ENCODE measurements at regions of chr6 and their contacts with region 1.

Region 1: DNA sequence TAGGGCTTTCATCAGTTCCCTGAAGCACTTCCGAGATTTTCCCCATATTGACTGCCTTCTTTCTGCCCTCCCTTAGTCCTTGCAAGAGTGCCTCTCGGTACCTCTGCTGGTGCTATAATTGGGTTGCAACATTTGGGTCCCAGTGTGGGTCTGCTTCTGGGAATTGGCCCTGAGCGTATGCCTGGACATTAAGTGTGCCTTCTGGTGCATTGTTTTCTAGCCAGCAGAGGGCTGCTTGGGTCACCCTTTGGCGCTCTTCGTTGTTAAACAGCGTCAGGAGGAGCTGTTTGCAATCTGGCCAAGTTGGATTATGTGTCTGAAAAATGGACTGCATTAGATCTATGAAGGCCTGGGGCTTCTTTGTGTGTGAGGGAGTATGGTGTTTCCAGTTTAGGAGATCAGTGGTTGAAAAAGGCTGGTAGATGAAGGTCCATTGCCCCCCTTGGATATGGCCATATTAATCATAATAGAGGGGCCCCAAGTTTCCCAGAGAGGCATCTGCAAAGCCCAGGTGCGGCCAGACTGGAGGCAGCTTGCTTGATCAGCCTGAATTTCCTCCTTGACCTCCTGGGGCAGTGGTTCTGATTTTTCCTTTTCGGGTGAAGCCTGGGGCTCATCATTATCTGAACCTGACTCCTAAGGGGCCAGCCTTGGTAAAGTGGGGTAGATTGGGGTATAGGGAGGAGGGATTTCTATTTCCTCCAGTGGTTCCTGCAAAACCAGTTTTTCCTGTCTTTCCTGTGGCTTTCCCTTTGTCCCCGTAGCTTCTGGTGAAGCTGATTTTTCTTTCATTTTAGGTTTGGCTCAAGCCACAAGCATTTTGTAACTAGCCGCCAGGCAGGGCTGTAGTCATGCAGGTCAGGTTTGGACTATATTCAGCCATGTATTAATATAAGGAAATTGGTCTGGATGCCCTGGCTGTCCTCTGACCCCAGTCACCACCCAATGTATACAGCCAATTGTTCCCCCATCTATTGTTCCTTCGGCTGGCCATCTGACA is 85.4 kb upstream of the GPR6 start:
- DNase-seq: no peak
- ATAC-seq: no peak
- H3K4me3 ChIP-seq: peak overlapping the region in 1 of 5 experiments; percentile 26
- H3K4me3 Mint-ChIP-seq: peak overlapping the region; percentile 32
- H3K27ac ChIP-seq: peak overlapping the region; percentile 87 to 89
- H3K27ac Mint-ChIP-seq: peak overlapping the region; percentile 76
- H3K4me1 ChIP-seq: peaks cover 55 to 62% of the 10 kb centered on the region in 2 donors
- H3K4me1 Mint-ChIP-seq: peaks cover 56% of the 10 kb centered on the region
- H3K27me3 ChIP-seq: no peaks in the 10 kb centered on the region
- H3K27me3 Mint-ChIP-seq: no peaks in the 10 kb centered on the region
- CTCF ChIP-seq: no peak

Region 2: GRCh38 chr6:109816452-109817374 is 76.0 kb before region 1 on chr6:
- CTCF ChIA-PET with region 1: no interaction called
- POLR2A ChIA-PET with region 1: no interaction called
- intact Hi-C with region 1: no loop called
- DNase-seq: no peak
- ATAC-seq: no peak
- H3K4me3 ChIP-seq: no peak overlapping the region
- H3K4me3 Mint-ChIP-seq: no peak overlapping the region
- H3K27ac ChIP-seq: no peak overlapping the region
- H3K27ac Mint-ChIP-seq: no peak overlapping the region
- H3K4me1 ChIP-seq: peaks cover 19 to 24% of the 10 kb centered on the region in 2 donors
- H3K4me1 Mint-ChIP-seq: peaks cover 26% of the 10 kb centered on the region
- H3K27me3 ChIP-seq: no peaks in the 10 kb centered on the region
- H3K27me3 Mint-ChIP-seq: no peaks in the 10 kb centered on the region
- CTCF ChIP-seq: no peak

Region 3: DNA sequence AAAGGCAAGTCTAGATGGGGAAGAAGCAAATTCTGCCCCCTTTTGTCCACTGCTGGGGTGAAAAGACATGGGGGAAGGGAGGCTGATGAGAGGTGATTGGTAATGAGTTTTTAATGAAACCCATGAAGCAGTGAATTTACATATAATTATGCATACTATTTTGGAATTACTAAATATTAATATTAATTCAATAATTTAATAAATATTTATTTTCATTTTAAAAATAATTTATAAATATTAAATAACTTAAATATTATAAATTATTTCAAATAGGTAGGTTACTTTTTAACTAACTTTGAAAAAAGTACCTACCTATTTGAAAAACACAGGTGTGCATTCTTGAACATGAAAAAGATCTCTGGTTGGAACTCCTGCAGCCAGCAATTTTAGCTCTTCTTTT is 52.7 kb before region 1 on chr6:
- CTCF ChIA-PET with region 1: no interaction called
- POLR2A ChIA-PET with region 1: no interaction called
- intact Hi-C with region 1: loop called (anchors 10 kb)
- DNase-seq: no peak
- ATAC-seq: no peak
- H3K4me3 ChIP-seq: no peak overlapping the region
- H3K4me3 Mint-ChIP-seq: no peak overlapping the region
- H3K27ac ChIP-seq: no peak overlapping the region
- H3K27ac Mint-ChIP-seq: no peak overlapping the region
- H3K4me1 ChIP-seq: no peaks in the 10 kb centered on the region
- H3K4me1 Mint-ChIP-seq: no peaks in the 10 kb centered on the region
- H3K27me3 ChIP-seq: no peaks in the 10 kb centered on the region
- H3K27me3 Mint-ChIP-seq: no peaks in the 10 kb centered on the region
- CTCF ChIP-seq: no peak